Activated CD4-positive, alpha-beta T cell treated with anti-CD3 and anti-CD28 coated beads, Interleukin-2, amount 10 ng/mL, durations not matched to agents 24 days and 14 days (primary cell): ENCODE measurements at regions of chr11 and their contacts with region 1.

Region 1: DNA sequence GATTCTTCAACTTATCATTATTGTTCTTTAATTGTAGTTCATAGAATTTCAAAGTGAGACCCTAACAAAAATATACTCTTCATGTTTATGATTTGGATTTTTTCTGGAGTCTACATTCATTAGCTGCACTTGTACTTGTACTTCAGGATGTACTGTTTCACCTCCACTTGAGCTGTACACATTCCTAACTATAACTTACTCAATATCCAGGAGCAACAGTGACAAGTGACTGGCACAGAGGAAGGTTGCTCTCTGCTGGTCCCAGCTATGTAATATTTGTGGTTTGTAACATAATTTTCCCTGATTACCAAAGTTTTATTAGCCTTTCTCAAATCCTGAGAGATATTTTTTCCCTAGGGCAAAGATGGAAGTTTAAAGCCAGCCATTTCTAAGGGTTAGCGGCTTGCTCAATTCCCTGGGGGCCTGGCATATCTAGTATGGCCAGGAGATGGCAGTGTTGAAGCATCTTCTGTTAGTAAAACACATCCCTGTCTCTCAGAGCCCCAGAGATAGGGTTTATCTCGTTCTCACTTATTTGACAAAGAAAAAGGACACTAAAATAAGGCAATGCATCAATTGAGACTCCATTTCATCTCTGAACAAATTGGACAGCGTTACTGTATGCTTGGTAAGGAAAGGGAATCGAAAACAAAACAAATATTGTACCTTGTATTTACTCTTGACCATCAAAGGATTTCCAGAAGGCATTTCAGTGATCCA is 14.2 kb downstream of the OR52A5 start:
- DNase-seq: peak; percentile 82
- H3K4me3 Mint-ChIP-seq: no peak overlapping the region
- H3K27ac Mint-ChIP-seq: no peak overlapping the region
- H3K4me1 Mint-ChIP-seq: no peaks in the 10 kb centered on the region
- H3K27me3 Mint-ChIP-seq: peaks cover 3% of the 10 kb centered on the region

Region 2: GRCh38 chr11:5137014-5137413 is 13.1 kb after region 1 on chr11:
- intact Hi-C with region 1: no loop called
- DNase-seq: no peak
- H3K4me3 Mint-ChIP-seq: no peak overlapping the region
- H3K27ac Mint-ChIP-seq: no peak overlapping the region
- H3K4me1 Mint-ChIP-seq: no peaks in the 10 kb centered on the region
- H3K27me3 Mint-ChIP-seq: no peaks in the 10 kb centered on the region

Region 3: DNA sequence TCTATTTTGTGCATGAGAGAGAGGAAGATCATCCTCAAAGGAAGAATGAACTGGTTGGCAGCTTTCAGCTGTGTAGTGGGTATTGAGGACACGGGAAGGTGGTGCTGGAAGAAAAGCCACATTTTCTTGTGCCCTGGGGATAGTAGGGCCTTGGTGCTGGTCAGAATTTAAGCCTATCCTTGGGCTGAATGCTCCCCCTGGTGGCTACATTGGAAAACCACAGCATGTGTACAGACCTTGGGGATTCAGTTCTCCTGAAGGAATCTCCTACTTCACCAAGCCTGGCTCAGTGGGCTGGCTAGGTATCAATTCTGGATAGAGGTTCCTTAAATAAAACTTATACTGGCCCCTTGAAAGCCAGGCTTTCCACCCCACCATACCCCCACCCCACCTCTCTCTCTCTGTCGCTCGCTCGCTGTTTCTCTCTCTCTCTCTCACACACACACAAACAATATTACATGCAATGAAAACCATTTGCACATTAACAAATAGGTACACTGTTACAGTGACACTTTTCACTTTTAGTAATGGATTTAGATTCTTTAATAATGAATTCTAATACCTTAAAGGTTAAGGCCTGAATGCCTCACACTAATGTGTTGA is 256.9 kb after region 1 on chr11:
- intact Hi-C with region 1: loop called (anchors 1 kb)
- DNase-seq: peak; percentile 71
- H3K4me3 Mint-ChIP-seq: no peak overlapping the region
- H3K27ac Mint-ChIP-seq: no peak overlapping the region
- H3K4me1 Mint-ChIP-seq: no peaks in the 10 kb centered on the region
- H3K27me3 Mint-ChIP-seq: no peaks in the 10 kb centered on the region

Region 4: GRCh38 chr11:5891216-5891800 is 767.3 kb after region 1 on chr11:
- intact Hi-C with region 1: loop called (anchors 2 kb)
- DNase-seq: no peak
- H3K4me3 Mint-ChIP-seq: no peak overlapping the region
- H3K27ac Mint-ChIP-seq: no peak overlapping the region
- H3K4me1 Mint-ChIP-seq: no peaks in the 10 kb centered on the region
- H3K27me3 Mint-ChIP-seq: peaks cover 3% of the 10 kb centered on the region